Prostate gland (tissue), 2 donors: ENCODE measurements at regions of chr1 and their contacts with region 1.

Region 1: GRCh38 chr1:43414634-43415223 is 25.0 kb downstream of the SZT2 start:
- DNase-seq: peak; percentile 51
- H3K4me3 ChIP-seq: no peak overlapping the region
- H3K27ac ChIP-seq: no peak overlapping the region
- H3K4me1 ChIP-seq: no peaks in the 10 kb centered on the region
- H3K27me3 ChIP-seq: no peaks in the 10 kb centered on the region
- CTCF ChIP-seq: peak; percentile 34 to 78 (median 68)
- POLR2A ChIP-seq: no peak

Region 2: GRCh38 chr1:42439940-42440339 is 974.8 kb before region 1 on chr1:
- intact Hi-C with region 1: no loop called
- DNase-seq: no peak
- H3K4me3 ChIP-seq: no peak overlapping the region
- H3K27ac ChIP-seq: no peak overlapping the region
- H3K4me1 ChIP-seq: no peaks in the 10 kb centered on the region
- H3K27me3 ChIP-seq: no peaks in the 10 kb centered on the region
- CTCF ChIP-seq: no peak
- POLR2A ChIP-seq: no peak

Region 3: GRCh38 chr1:43227143-43227764 is 187.5 kb before region 1 on chr1:
- intact Hi-C with region 1: loop called (anchors 1 kb)
- DNase-seq: peak; percentile 83
- H3K4me3 ChIP-seq: no peak overlapping the region
- H3K27ac ChIP-seq: no peak overlapping the region
- H3K4me1 ChIP-seq: peaks cover 6% of the 10 kb centered on the region
- H3K27me3 ChIP-seq: no peaks in the 10 kb centered on the region
- CTCF ChIP-seq: peak; percentile 95 to 97 (median 96)
- POLR2A ChIP-seq: no peak

Region 4: GRCh38 chr1:43383449-43383848 is 31.3 kb before region 1 on chr1:
- intact Hi-C with region 1: no loop called
- DNase-seq: no peak
- H3K4me3 ChIP-seq: no peak overlapping the region
- H3K27ac ChIP-seq: no peak overlapping the region
- H3K4me1 ChIP-seq: peaks cover 6% of the 10 kb centered on the region
- H3K27me3 ChIP-seq: no peaks in the 10 kb centered on the region
- CTCF ChIP-seq: peak in 2 of 4 experiments; percentile 36 to 37
- POLR2A ChIP-seq: no peak

Region 5: GRCh38 chr1:43650310-43651085 is 235.8 kb after region 1 on chr1:
- intact Hi-C with region 1: no loop called
- DNase-seq: peak; percentile 98
- H3K4me3 ChIP-seq: peak overlapping the region; percentile 64 to 71
- H3K27ac ChIP-seq: peak overlapping the region; percentile 95 to 97
- H3K4me1 ChIP-seq: peaks cover 3% of the 10 kb centered on the region
- H3K27me3 ChIP-seq: no peaks in the 10 kb centered on the region
- CTCF ChIP-seq: no peak
- POLR2A ChIP-seq: peak; percentile 97